Esophagus muscularis mucosa (tissue), 4 donors: ENCODE measurements at regions of chr3 and their contacts with region 1.

Region 1: DNA sequence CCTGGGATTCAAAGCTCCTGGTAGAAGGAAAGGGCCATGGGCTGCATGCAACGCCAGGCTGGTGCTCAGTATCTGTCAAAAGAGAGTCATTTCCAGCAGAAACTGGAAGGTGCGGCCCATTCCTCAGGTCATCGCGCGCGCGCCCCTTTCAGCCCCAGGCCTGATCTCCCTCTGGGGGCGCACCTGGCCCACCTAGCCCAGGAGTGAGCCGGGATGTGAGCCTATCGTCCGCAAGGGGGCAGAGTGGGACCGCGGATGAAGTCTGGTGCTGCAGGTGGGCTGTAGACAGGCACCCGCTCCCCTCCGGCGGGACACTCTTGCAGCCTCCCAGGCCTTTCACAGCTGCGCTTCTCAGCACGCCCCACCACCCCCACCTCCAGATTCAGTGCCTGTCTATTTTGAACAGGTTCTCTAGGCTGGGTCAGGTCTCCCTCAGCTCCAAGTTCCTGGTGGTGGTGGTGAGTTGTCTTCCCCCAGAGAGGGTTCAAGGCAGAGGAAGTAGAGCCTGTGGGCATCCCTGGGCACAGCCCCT is 5.8 kb upstream of the RPL29 start:
- DNase-seq: peak; percentile 95
- H3K4me3 ChIP-seq: no peak overlapping the region
- H3K27ac ChIP-seq: no peak overlapping the region
- H3K4me1 ChIP-seq: peaks cover 23 to 32% (median 31%) of the 10 kb centered on the region in 4 donors
- H3K27me3 ChIP-seq: peaks cover 0 to 31% (median 0%) of the 10 kb centered on the region in 4 donors
- CTCF ChIP-seq: peak; percentile 85 to 94 (median 93)
- EP300 ChIP-seq: no peak
- POLR2A ChIP-seq: no peak

Region 2: GRCh38 chr3:52123106-52123725 is 121.7 kb after region 1 on chr3:
- intact Hi-C with region 1: loop called (anchors 1 kb)
- DNase-seq: no peak
- H3K4me3 ChIP-seq: no peak overlapping the region
- H3K27ac ChIP-seq: peak overlapping the region in 3 of 4 donors; percentile 47 to 57 (median 54)
- H3K4me1 ChIP-seq: peaks cover 24 to 40% (median 32%) of the 10 kb centered on the region in 4 donors
- H3K27me3 ChIP-seq: no peaks in the 10 kb centered on the region
- CTCF ChIP-seq: peak in 2 of 3 experiments; percentile 88 to 93
- EP300 ChIP-seq: no peak
- POLR2A ChIP-seq: no peak

Region 3: DNA sequence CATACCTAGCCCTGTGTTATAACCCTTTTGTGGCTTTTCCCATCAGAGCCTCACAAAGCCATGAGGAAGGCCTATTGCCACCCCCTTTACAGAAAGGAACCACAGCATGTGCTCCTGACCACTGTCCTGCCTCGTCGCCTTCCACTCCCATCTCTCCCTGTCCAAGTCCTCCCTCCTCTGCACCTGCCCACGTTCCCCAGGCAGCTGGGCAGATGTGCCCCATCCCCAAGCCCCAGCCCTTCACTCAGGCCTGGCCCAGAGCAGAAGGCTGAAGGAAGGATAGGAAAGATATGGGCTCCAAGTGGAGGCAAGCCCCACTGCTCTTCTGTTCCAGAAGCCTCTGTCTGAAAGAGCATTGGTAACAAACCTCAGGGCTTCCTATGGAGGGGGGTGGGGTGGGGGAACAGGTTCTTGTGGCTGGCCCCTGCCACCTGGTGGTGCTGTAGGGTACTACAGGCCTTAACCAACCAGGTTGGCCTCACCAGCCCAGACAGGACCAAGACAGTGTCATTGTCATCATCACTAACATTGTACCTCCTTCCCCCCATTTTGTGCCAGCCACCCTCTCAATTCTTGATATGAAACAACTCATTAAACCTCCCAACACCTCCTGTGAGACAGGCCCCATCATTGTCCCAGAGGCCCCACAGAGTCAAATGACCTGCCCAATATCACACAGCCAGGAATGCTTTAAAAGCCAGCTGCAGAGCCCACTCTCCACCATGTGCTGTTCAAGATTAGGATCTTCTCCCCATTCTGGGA is 142.7 kb after region 1 on chr3:
- intact Hi-C with region 1: loop called (anchors 1 kb)
- DNase-seq: peak; percentile 96
- H3K4me3 ChIP-seq: no peak overlapping the region
- H3K27ac ChIP-seq: no peak overlapping the region
- H3K4me1 ChIP-seq: peaks cover 3 to 5% (median 4%) of the 10 kb centered on the region in 4 donors
- H3K27me3 ChIP-seq: no peaks in the 10 kb centered on the region
- CTCF ChIP-seq: peak; percentile 94 to 99 (median 97)
- EP300 ChIP-seq: no peak
- POLR2A ChIP-seq: no peak

Region 4: DNA sequence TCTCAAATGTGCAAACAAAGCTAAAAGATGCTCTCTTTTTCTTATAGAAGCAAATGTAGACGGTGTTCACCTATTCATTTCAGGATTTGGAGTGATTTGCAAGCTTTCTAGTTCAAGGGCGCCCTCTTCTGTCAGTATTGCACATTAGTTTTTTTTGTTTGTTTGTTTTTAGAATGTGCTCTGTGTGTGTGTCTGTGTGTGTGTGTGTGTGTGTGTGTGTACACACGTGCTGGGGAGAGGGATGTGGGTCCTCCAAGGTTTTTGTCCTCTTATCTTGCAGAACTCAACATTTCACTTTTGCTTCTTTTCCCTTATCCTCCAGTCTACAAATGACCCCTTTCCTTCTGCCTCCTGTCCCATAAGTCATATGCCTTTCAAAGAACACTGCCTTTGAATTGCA is 338.1 kb after region 1 on chr3:
- intact Hi-C with region 1: loop called (anchors 10 kb)
- DNase-seq: no peak
- H3K4me3 ChIP-seq: no peak overlapping the region
- H3K27ac ChIP-seq: no peak overlapping the region
- H3K4me1 ChIP-seq: no peaks in the 10 kb centered on the region
- H3K27me3 ChIP-seq: no peaks in the 10 kb centered on the region
- CTCF ChIP-seq: peak; percentile 69 to 77 (median 70)
- EP300 ChIP-seq: no peak
- POLR2A ChIP-seq: no peak